ENCODE measurements at regions of chr7 and their contacts with region 1.

Region 1: DNA sequence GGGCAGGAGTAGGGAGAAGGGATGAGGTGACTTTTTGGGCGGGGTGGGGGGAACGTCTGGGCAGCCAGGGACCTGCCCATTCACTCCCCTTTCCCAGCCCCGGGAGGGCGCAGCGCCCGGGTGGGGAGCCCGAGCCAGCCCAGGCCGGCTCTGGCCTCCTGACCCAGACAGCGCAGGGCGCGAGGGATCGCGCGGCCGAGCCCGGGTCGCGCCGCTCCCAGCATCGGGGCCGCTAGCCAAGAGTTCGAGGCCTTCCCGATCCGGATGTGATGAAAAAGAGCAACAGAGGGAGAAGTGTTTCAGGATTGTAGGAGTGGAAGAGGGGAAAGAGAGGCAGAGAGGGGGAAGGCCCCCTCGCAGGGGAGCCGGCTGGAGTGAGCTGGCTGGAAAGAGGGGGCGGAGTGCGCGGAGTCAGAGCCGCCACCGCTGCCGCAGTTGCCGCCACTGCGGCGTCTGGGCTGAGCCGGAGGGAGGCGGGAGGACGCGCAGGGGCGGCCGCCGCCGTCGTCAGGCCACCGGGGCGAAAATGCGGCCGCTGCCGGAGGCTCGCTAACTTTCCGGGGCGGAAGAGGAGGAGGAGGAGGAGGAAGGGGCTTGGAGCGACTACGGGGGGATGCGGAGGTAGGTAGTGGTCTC is at the start of gene MDFIC:
- DNase-seq: peak; percentile 90
- total RNA-seq, gene MDFIC: 27.0 to 28.7 TPM

Region 2: DNA sequence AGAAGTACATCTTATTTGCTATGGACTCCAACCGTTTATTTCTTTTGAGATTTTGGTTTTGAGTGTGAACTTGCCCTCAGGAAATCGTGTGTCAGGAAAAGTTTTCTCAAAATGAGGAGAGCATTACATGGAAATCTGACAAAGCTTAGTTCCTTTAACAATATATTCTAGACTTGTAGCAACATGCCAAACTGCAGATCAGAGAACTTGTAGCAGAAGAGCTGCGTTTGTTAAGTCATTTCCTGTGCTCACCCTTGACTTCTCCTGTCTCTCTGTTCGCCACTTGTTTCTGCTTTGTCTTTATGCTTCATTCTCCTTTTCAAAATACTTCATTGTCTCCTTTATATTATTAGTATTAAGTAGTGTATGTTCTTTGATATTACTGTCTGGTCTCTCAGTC is 624.1 kb before region 1 on chr7:
- intact Hi-C with region 1: no loop called
- DNase-seq: no peak

Region 3: GRCh38 chr7:114889646-114890285 is 32.4 kb before region 1 on chr7:
- intact Hi-C with region 1: loop called in 1 of 2 experiments (anchors 1 kb)
- DNase-seq: no peak

Region 4: DNA sequence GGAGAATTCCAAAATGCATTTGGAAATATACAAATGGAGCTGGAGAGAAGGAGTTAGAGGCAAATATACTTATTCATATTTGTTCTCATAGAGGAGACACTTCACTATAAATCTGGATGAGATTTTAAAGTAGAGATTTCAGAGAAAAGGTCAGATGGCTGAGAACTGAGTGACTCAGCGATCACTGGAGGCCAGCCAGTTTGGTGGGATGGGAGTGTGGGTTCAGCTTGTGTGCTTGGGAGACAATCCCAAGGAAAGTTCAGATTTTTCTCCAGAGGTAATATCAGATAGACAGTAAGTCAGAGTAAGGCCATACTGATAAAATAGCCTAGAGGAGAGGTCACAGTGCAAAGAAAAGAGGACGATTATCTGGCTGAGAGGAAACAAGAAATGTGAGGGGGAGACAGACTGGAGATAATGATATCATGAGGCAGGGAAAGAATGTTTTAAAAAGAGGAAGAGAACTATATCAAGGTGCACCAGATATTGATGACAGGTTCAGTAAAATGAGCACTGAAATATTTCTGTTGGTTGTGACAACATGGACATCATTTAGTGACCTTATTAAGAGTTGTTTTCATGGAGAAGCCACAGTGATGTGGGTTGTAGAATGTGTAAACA is 66.7 kb after region 1 on chr7:
- intact Hi-C with region 1: no loop called
- DNase-seq: peak; percentile 94

Region 5: DNA sequence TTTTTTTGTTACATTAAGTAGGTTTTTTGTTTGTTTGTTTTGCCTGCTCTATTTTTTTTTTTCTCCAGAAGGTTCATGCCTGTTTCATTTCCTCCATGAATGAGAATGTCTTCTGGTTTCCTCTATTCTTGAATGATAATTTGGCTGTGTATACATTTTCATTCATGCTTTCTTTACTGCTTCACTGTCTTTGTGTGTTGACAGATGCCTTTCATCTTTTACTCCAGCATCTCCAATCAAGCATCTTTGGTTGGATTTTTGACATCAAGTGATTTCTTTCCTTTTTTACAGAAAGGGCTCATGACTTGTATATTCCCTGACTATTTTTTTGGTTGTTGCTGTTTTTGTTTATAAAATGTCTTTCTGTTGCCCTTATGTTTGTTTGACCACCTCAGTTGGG is 156.3 kb after region 1 on chr7:
- intact Hi-C with region 1: no loop called
- DNase-seq: no peak

Measured in posterior vena cava (tissue), 2 donors.